ENCODE measurements at regions of chr11 and their contacts with region 1.

Region 1: DNA sequence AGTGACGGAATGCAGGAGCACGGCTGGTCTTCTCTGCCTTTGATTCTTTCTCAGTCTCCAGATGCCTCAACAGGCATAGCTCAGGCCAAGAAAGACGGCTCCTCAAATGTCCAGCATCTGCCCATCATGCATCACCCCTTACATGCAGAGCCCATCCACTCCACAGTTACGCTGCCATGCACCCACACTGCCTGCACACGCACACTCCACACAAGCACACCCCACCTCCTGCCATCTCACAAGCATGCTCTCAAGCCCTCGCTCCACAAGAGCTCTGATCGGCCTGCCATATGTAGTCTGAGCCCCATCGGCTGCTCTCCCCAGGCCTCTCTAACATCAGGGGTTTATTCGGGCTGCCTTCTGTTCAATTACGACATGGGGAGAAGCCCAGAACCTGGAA is 18.8 kb downstream of the SCN4B start:
- DNase-seq: no peak
- ATAC-seq: no peak
- H3K4me3 ChIP-seq: no peak overlapping the region
- H3K27ac ChIP-seq: no peak overlapping the region
- H3K4me1 ChIP-seq: no peaks in the 10 kb centered on the region
- CTCF ChIP-seq: no peak
- EP300 ChIP-seq: no peak
- POLR2A ChIP-seq: no peak
- RAD21 ChIP-seq: no peak

Region 2: GRCh38 chr11:118145285-118146227 is 11.7 kb after region 1 on chr11:
- CTCF ChIA-PET with region 1: interaction called, 15 read pairs
- POLR2A ChIA-PET with region 1: no interaction called
- DNase-seq: peak; percentile 67 to 92
- ATAC-seq: peak; percentile 81 to 96
- H3K4me3 ChIP-seq: peak overlapping the region; percentile 55
- H3K27ac ChIP-seq: peak overlapping the region; percentile 34 to 84; a peak in 5 of 6 replicates
- H3K4me1 ChIP-seq: no peaks in the 10 kb centered on the region
- CTCF ChIP-seq: peak; percentile 71
- EP300 ChIP-seq: no peak
- POLR2A ChIP-seq: no peak
- RAD21 ChIP-seq: peak; percentile 87 to 95

Measured in A549 (cell line).